HepG2 (cell line): ENCODE measurements at regions of chr10 and their contacts with region 1.

Region 1: DNA sequence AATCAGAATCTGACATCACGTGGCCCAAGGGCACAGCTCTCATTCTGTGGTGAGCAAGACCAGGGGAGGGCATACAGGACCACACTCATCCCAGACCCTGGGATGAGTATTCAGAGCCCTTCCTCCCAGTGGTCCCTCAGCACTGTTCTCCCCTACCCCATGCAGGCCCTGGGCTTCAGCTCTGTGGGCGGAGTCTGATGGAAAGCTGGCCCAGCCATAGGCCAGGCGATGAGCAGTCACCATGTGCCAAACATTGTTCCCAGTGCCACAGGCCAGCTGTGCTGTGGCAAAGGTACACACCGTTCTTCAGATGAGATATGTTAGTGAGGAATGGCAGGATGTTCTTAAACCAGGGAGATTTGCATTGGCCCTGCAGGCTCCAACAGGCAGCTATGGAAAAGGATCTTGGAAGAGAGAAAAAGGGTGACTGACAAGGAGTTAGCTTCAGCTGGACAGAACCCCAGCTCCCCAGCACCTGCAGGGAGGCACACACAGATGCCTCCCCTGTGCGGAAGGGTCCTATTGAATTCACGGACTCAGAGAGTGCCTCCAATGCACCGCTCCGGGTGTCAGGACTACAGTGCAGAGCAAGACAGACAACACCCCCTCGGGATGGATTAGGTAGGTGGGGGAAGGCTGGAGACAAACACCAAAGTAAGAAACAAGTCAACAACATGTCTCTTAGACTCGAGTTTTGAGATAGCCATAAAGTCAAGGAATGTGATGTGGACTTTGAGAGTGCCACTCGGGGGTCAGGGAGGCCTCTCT is 596.0 kb upstream of the MGMT start:
- DNase-seq: no peak
- ATAC-seq: no peak
- H3K4me3 ChIP-seq: no peak overlapping the region
- H3K27ac ChIP-seq: no peak overlapping the region
- H3K4me1 ChIP-seq: no peaks in the 10 kb centered on the region
- H3K27me3 ChIP-seq: peaks cover 0 to 31% of the 10 kb centered on the region in 2 experiments; a peak in 3 of 5 replicates
- CTCF ChIP-seq: no peak
- EP300 ChIP-seq: no peak
- POLR2A ChIP-seq: no peak
- RAD21 ChIP-seq: no peak

Region 2: GRCh38 chr10:128894641-128895040 is 23.6 kb after region 1 on chr10:
- CTCF ChIA-PET with region 1: no interaction called
- POLR2A ChIA-PET with region 1: no interaction called
- in situ Hi-C with region 1: no loop called
- intact Hi-C with region 1: loop called (anchors 1 kb)
- DNase-seq: no peak
- ATAC-seq: no peak
- H3K4me3 ChIP-seq: no peak overlapping the region
- H3K27ac ChIP-seq: no peak overlapping the region
- H3K4me1 ChIP-seq: no peaks in the 10 kb centered on the region
- H3K27me3 ChIP-seq: peaks cover 0 to 9% of the 10 kb centered on the region in 2 experiments; a peak in 1 of 5 replicates
- CTCF ChIP-seq: no peak
- EP300 ChIP-seq: no peak
- POLR2A ChIP-seq: no peak
- RAD21 ChIP-seq: no peak